Left ventricle myocardium superior (tissue), 1 donor: ENCODE measurements at regions of chr10 and their contacts with region 1.

Region 1: DNA sequence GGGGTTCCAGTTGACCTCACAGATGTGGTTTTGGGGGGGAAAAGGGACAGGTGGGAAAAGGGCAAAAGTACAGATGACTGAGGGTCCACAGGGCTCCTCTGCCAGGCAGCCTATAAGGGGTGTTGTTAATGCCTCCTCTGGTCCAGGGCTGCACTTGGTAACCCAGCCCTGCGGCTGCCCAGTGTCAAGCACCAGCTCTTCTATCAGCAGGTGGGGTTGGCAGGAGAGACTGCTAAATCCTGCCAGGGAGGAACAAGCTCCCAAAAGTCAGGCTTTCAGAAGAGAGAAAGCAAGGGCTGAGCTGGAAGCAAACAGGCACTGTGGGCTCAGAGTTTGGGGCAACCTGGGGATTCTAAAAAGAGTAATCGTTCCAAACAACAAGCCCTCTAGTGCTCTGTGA is 39.1 kb downstream of the LRRC20 start:
- DNase-seq: peak; percentile 62
- ATAC-seq: peak; percentile 92

Region 2: DNA sequence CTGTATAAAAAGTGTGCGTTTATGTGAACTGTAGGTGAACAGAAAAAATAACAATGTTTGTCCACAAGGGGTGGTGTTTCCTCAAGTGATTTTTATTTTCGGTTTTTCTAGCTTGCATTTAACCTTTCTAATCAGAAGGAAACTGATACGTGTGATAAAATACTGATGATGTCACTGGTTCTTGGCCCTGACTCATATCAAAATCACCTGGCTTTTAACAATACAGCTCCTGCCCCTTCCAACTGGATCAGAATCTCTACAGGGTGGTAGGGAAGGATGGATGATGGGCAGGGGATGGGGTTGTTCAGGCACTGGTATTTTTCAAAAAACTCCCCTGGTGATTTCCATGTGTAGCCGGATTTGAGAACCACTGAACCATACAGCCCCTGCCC is 70.4 kb before region 1 on chr10:
- intact Hi-C with region 1: loop called (anchors 2 kb)
- DNase-seq: no peak
- ATAC-seq: peak; percentile 20

Region 3: GRCh38 chr10:71187600-71187999 is 844.3 kb after region 1 on chr10:
- intact Hi-C with region 1: no loop called
- DNase-seq: no peak
- ATAC-seq: peak; percentile 90